Activated B cell treated with CpG ODN at 0.5 μM for 24 hours (primary cell): ENCODE measurements at regions of chr20 and their contacts with region 1.

Region 1: DNA sequence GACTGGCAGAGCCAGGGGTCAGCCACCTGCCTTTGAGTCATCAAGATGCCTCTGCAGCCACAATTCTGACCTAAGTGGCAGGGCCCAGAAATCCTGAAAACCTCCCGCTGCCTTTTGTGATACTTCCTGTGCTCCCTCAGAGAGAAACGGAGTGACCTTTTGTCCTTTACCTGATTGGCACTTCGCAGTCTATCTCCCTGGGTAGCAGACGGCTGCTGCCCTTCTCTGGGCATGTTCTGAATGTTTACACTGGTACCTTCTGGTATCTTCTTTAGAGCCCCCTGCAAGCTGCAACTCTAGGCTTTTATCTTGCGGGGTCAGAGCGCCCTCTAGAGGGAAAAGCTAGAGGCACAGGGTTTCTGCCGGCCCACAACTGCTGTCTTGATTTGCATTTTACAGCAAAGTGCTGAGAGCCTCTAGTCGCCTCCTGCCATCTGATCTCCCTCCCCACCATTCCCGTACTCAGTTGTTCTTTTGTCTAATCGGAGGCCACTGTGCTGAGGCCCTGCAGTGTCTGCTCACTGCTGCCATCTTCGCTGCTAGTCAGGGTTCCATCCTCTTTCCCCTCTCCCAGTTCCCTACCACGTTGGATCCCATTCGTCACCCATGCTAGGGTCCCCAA is 26.9 kb downstream of the SPATA2 start:
- DNase-seq: peak; percentile 54
- ATAC-seq: peak; percentile 69
- H3K4me3 Mint-ChIP-seq: no peak overlapping the region
- H3K27ac Mint-ChIP-seq: peak overlapping the region; percentile 46
- H3K4me1 Mint-ChIP-seq: peaks cover 10% of the 10 kb centered on the region
- H3K27me3 Mint-ChIP-seq: no peaks in the 10 kb centered on the region
- CTCF ChIP-seq: no peak

Region 2: DNA sequence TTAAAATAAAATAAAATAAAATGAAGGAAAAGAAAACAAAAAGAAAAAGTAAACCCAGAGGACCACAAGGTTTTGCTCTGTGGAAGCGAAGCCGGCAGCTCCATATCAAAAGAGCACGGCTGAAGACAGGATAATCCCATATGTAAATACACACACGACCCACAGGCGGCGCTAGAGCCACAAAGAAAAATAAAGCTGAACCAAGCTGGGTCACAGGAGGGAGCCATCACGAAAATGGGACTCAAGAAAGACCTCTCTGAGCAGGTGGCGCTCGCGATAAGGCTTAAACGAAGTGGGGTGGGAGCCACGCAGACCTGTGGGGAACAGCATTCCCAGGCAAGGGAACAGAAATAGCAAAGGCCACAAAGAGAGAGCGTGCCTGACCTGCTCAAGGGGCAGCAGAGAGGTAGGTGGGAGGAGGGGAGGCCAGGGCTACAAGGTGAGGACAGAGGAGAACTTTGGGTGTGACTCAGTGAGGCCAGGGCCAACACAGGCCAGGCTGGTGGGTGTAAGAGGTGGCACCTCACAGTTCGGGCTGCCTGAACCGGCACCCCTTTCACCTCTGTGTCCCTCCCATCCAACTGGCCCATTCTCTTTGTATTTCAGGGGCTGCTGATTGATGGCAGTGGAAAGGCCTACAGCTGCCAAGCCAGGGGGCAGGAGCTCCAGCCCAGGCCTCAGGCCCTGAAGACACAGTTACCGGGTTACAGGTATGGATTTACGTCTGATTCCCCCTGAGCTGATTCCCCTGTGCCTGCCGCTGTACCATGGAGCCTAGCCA is 346.5 kb before region 1 on chr20:
- CTCF ChIA-PET with region 1: interaction called, 9 read pairs
- POLR2A ChIA-PET with region 1: no interaction called
- intact Hi-C with region 1: loop called (anchors 1 kb)
- DNase-seq: peak; percentile 21
- ATAC-seq: peak; percentile 80
- H3K4me3 Mint-ChIP-seq: no peak overlapping the region
- H3K27ac Mint-ChIP-seq: no peak overlapping the region
- H3K4me1 Mint-ChIP-seq: no peaks in the 10 kb centered on the region
- H3K27me3 Mint-ChIP-seq: peaks cover 14% of the 10 kb centered on the region
- CTCF ChIP-seq: no peak

Region 3: GRCh38 chr20:49594143-49594930 is 294.1 kb before region 1 on chr20:
- CTCF ChIA-PET with region 1: no interaction called
- POLR2A ChIA-PET with region 1: no interaction called
- intact Hi-C with region 1: no loop called
- DNase-seq: no peak
- ATAC-seq: no peak
- H3K4me3 Mint-ChIP-seq: no peak overlapping the region
- H3K27ac Mint-ChIP-seq: no peak overlapping the region
- H3K4me1 Mint-ChIP-seq: peaks cover 12% of the 10 kb centered on the region
- H3K27me3 Mint-ChIP-seq: peaks cover 3% of the 10 kb centered on the region
- CTCF ChIP-seq: no peak